Psoas muscle (tissue), 8 donors: ENCODE measurements at regions of chr2 and their contacts with region 1.

Region 1: GRCh38 chr2:160570446-160570845 is 76.8 kb upstream of the RBMS1 start:
- DNase-seq: peak in 1 of 2 donors; percentile 11
- ATAC-seq: no peak
- H3K4me3 ChIP-seq: no peak overlapping the region
- H3K27ac ChIP-seq: no peak overlapping the region
- H3K4me1 ChIP-seq: peaks cover 19% of the 10 kb centered on the region
- H3K27me3 ChIP-seq: no peaks in the 10 kb centered on the region
- CTCF ChIP-seq: no peak

Region 2: DNA sequence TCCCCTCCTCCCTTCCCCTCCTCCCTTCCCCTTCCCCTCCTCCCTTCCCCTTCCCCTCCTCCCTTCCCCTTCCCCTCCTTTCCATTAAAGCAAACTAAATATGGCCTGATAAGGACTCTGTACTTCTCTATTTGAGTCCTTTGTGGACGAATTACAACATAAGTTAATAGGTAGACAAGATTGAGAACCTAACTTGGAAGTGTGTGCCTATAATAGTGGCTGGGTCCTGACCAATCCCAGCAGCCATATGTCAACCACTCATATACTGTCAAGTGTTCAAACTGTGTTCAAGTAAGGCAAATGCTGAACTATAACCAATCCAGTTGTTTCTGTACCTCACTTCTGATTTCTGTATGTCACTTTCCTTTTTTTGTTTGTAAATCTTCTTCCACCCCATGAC is 20.2 kb after region 1 on chr2:
- intact Hi-C with region 1: loop called in 1 of 2 experiments (anchors 2 kb)
- DNase-seq: no peak
- ATAC-seq: no peak
- H3K4me3 ChIP-seq: no peak overlapping the region
- H3K27ac ChIP-seq: no peak overlapping the region
- H3K4me1 ChIP-seq: no peaks in the 10 kb centered on the region
- H3K27me3 ChIP-seq: no peaks in the 10 kb centered on the region
- CTCF ChIP-seq: no peak

Region 3: DNA sequence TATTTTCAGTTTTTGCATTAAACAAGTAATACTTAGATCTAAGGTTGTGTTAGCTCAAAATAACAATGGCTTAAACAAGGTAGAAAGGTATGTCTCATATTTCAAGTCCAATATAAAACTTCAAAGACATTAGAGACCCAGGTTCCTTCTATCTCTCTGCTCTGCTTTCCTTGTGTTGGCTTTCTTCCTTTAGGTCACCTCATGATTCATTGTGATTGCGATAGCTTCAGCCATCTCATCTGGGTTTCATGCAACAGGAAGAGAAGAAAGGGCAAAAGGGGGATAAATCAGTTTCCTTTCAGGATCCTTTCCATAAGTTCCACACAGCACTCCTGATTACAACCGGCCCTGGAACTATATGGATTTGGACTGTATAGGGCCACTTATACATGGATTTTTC is 829.6 kb after region 1 on chr2:
- intact Hi-C with region 1: no loop called
- DNase-seq: no peak
- ATAC-seq: no peak
- H3K4me3 ChIP-seq: no peak overlapping the region
- H3K27ac ChIP-seq: no peak overlapping the region
- H3K4me1 ChIP-seq: no peaks in the 10 kb centered on the region
- H3K27me3 ChIP-seq: no peaks in the 10 kb centered on the region
- CTCF ChIP-seq: no peak